ENCODE measurements at regions of chr5 and their contacts with region 1.

Region 1: GRCh38 chr5:172006321-172007174 is at the start of gene FBXW11:
- DNase-seq: peak; percentile 86 to 97 (median 90)
- ATAC-seq: peak; percentile 91
- H3K4me3 ChIP-seq: peak within 1 kb of the TSS; percentile 93
- H3K27ac ChIP-seq: peak within 1 kb of the TSS; percentile 100
- H3K4me1 ChIP-seq: peaks cover 19 to 37% of the 10 kb centered on the region in 2 experiments
- H3K27me3 ChIP-seq: no peaks in the 10 kb centered on the region
- CTCF ChIP-seq: no peak
- EP300 ChIP-seq: no peak
- POLR2A ChIP-seq: peak; percentile 95
- RAD21 ChIP-seq: no peak
- polyA plus RNA-seq, gene FBXW11: 3.0 to 3.5 TPM

Region 2: GRCh38 chr5:171913987-171914273 is 92.6 kb before region 1 on chr5:
- CTCF ChIA-PET with region 1: no interaction called
- POLR2A ChIA-PET with region 1: interaction called, 5 read pairs
- in situ Hi-C with region 1: no loop called
- intact Hi-C with region 1: loop called (anchors 2 kb)
- DNase-seq: no peak
- ATAC-seq: no peak
- H3K4me3 ChIP-seq: no peak overlapping the region
- H3K27ac ChIP-seq: no peak overlapping the region
- H3K4me1 ChIP-seq: no peaks in the 10 kb centered on the region
- H3K27me3 ChIP-seq: no peaks in the 10 kb centered on the region
- CTCF ChIP-seq: no peak
- EP300 ChIP-seq: no peak
- POLR2A ChIP-seq: no peak
- RAD21 ChIP-seq: no peak

Region 3: GRCh38 chr5:171953860-171954701 is 52.5 kb before region 1 on chr5:
- CTCF ChIA-PET with region 1: no interaction called
- POLR2A ChIA-PET with region 1: interaction called, 4 read pairs
- in situ Hi-C with region 1: no loop called
- intact Hi-C with region 1: loop called (anchors 5 kb)
- DNase-seq: peak; percentile 53 to 84 (median 70)
- ATAC-seq: peak; percentile 98
- H3K4me3 ChIP-seq: no peak overlapping the region
- H3K27ac ChIP-seq: peak overlapping the region; percentile 58
- H3K4me1 ChIP-seq: peaks cover 0 to 31% of the 10 kb centered on the region in 2 experiments
- H3K27me3 ChIP-seq: no peaks in the 10 kb centered on the region
- CTCF ChIP-seq: no peak; a peak in 1 of 6 replicates
- EP300 ChIP-seq: peak; percentile 99
- POLR2A ChIP-seq: no peak
- RAD21 ChIP-seq: no peak; a peak in 1 of 4 replicates

Region 4: DNA sequence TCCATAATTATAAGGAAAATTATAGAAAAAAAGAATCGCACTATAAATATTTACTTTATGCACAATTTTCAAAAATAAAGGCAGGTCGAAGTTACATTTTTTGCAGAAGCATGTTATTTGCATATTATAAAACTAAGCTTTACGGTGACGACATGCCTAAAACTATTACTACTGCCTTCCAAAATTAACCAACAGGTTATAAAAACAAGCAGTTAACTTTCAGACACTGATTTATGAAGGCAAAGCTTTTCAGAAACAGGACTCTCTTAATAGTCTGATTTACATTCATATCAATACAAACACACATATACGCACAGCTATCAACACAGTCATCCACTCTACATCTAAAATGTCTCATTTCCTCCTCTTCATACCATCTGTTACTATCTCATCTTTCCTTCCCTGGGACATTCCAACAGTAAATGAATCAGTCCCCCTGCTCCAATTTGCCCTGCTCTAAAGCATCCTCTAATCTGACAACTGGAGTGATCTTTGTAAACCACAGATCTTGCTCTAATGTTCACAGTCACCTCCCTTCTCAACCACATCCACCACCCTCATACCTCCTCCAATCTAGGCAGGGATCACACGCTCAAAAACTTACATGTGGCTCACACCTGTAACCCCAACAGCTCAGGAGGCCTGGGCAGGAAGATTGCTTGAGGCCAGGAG is 21.7 kb before region 1 on chr5:
- CTCF ChIA-PET with region 1: no interaction called
- POLR2A ChIA-PET with region 1: interaction called, 20 read pairs
- in situ Hi-C with region 1: no loop called
- intact Hi-C with region 1: no loop called
- DNase-seq: no peak
- ATAC-seq: peak; percentile 38
- H3K4me3 ChIP-seq: no peak overlapping the region
- H3K27ac ChIP-seq: no peak overlapping the region
- H3K4me1 ChIP-seq: peaks cover 5 to 6% of the 10 kb centered on the region in 2 experiments; a peak in 3 of 5 replicates
- H3K27me3 ChIP-seq: no peaks in the 10 kb centered on the region
- CTCF ChIP-seq: no peak
- EP300 ChIP-seq: no peak
- POLR2A ChIP-seq: no peak
- RAD21 ChIP-seq: no peak

Region 5: DNA sequence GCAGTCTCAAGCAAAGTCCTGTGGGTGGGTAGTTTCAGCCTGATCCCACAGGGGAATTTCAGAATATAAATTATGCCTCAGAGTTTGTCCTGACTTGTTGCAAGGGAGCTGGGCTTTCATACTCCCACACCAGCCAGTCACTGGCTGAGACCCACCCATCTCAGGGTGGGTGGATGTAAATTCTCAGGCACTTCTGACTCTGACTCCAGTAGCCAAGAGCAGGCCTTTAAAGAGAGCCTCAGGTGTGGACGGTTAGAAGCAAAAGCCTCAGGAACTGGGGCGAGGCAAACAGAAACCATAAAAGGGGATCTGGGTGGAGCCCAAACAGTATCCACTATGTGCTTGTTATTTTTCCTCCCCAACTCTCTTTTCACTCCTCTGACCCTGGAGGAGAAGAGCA is 28.5 kb after region 1 on chr5:
- CTCF ChIA-PET with region 1: no interaction called
- POLR2A ChIA-PET with region 1: no interaction called
- in situ Hi-C with region 1: no loop called
- intact Hi-C with region 1: loop called (anchors 2 kb)
- DNase-seq: no peak
- ATAC-seq: no peak; the same call in 2 of the 3 replicates
- H3K4me3 ChIP-seq: no peak overlapping the region
- H3K27ac ChIP-seq: no peak overlapping the region
- H3K4me1 ChIP-seq: no peaks in the 10 kb centered on the region
- H3K27me3 ChIP-seq: peaks cover 0 to 4% of the 10 kb centered on the region in 2 experiments; a peak in 2 of 5 replicates
- CTCF ChIP-seq: no peak
- EP300 ChIP-seq: no peak
- POLR2A ChIP-seq: no peak
- RAD21 ChIP-seq: no peak

Region 6: GRCh38 chr5:172076761-172077244 is 70.3 kb after region 1 on chr5:
- CTCF ChIA-PET with region 1: no interaction called
- POLR2A ChIA-PET with region 1: no interaction called
- in situ Hi-C with region 1: no loop called
- intact Hi-C with region 1: no loop called
- DNase-seq: no peak
- ATAC-seq: 0 out of 3 replicates have a peak, but pooled peaks have one; percentile 34
- H3K4me3 ChIP-seq: no peak overlapping the region
- H3K27ac ChIP-seq: no peak overlapping the region
- H3K4me1 ChIP-seq: no peaks in the 10 kb centered on the region; a peak in 2 of 5 replicates
- H3K27me3 ChIP-seq: peaks cover 1 to 6% of the 10 kb centered on the region in 2 experiments; a peak in 2 of 5 replicates
- CTCF ChIP-seq: no peak
- EP300 ChIP-seq: no peak
- POLR2A ChIP-seq: no peak
- RAD21 ChIP-seq: no peak

Measured in K562 (cell line).